A673 (cell line): ENCODE measurements at regions of chr15 and their contacts with region 1.

Region 1: DNA sequence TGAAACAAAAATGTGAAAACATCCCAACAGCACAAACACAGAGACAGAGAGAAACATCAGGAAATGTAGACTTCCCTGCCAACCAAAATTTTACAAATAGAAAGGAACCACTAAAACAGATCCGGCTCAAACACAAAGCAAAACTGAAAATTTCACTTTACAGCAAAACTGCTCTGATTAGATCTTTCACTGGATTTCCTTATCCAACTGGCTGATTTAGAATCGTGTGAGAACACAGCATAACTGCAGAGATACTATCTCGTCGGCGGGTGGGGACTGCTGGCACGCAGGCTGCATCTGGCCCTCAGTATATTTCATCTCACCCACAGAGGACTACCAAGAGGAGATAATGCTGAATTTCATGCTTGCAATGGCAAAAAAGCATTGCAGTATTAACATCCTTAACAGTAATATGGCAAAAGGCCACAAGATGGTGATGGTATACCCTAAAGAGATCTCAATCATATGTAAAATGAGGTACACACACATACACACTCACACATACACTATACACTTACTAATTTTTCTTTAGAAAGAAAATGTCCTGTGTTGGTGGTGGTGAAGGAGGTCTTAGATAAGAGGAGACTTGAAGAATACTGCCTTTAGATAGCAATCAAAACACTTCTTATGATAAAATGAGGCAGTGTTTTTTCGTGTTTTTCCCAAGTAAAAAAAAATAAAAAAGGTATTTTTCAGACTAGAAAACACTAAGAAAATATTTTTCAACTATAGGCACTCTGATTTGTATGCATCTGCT is 10.6 kb upstream of the LEO1 start:
- DNase-seq: peak; percentile 88
- H3K4me3 ChIP-seq: peak overlapping the region; percentile 10
- H3K27ac ChIP-seq: peak overlapping the region; percentile 3
- H3K4me1 ChIP-seq: peaks cover 5% of the 10 kb centered on the region
- H3K27me3 ChIP-seq: no peaks in the 10 kb centered on the region
- CTCF ChIP-seq: peak; percentile 66

Region 2: DNA sequence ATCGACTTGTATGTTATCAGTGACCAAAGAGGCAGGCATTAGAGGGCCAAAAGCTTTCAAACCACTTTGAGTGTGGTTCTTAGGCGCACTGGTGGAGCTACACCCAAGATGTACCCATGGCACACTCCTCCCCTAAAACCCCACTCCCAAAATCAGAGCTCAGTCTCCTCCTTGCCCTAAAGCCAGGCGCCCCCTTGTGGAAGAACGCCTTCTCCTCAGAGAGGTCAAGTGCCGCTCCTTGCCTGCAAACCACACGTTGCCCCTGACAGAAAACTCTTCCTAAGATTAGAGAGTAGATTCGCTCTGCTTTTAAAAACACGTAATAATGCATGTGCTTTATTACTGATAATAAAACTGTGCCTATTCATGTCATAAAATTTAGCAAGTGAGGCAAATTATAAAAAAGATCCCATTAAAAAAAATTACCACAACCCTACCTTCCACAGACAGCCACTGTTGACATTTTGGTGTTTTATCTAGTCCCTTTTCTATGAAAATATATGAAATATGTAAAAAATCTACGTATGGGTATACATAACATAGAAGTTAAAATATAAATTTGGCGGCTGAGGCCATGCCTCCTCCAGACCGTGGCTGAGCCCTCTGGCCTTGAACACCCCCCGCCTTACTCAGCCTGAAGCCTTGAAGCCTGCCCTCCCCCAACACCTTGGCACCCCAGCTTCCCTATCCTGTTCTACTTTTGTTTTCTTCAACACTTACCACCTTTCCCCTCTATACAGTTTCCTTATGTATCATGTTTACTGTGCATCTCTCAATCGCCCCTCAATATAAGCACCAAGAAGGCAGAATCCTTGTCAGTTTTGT is 96.9 kb after region 1 on chr15:
- CTCF ChIA-PET with region 1: interaction called, 4 read pairs
- POLR2A ChIA-PET with region 1: no interaction called
- intact Hi-C with region 1: loop called (anchors 1 kb)
- DNase-seq: peak; percentile 84
- H3K4me3 ChIP-seq: no peak overlapping the region
- H3K27ac ChIP-seq: no peak overlapping the region
- H3K4me1 ChIP-seq: no peaks in the 10 kb centered on the region
- H3K27me3 ChIP-seq: no peaks in the 10 kb centered on the region
- CTCF ChIP-seq: peak; percentile 95